ENCODE measurements at regions of chr6 and their contacts with region 1.

Region 1: DNA sequence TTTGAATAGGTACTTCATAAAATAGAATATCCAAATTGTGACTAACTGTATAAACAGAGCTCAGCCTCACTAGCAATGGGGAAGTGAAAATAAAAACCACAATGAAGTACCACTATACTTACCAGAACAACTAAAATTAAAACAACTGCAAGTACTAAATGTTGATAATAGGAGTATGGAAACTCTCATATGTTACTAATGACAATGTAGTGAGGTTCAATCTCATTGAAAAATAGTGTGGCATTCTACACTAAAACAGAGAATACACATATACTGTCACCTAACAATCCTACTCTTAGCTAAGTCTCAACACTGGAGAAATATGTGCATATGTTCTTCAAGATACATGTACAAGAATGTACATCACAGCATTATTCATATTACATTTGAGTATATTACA is 132.0 kb upstream of the CARMIL1 start:
- DNase-seq: no peak
- H3K4me3 Mint-ChIP-seq: no peak overlapping the region
- H3K27ac Mint-ChIP-seq: peak overlapping the region; percentile 55
- H3K4me1 Mint-ChIP-seq: peaks cover 49% of the 10 kb centered on the region
- H3K27me3 Mint-ChIP-seq: no peaks in the 10 kb centered on the region

Region 2: GRCh38 chr6:25166955-25167748 is 19.9 kb after region 1 on chr6:
- CTCF ChIA-PET with region 1: no interaction called
- intact Hi-C with region 1: loop called (anchors 1 kb)
- DNase-seq: no peak
- H3K4me3 Mint-ChIP-seq: no peak overlapping the region
- H3K27ac Mint-ChIP-seq: no peak overlapping the region
- H3K4me1 Mint-ChIP-seq: peaks cover 52% of the 10 kb centered on the region
- H3K27me3 Mint-ChIP-seq: no peaks in the 10 kb centered on the region